ENCODE measurements at regions of chr11 and their contacts with region 1.

Region 1: GRCh38 chr11:304915-305843 is 2.4 kb upstream of the IFITM2 start:
- DNase-seq: peak; percentile 64 to 75 (median 67)
- H3K4me3 ChIP-seq: no peak overlapping the region
- H3K4me3 Mint-ChIP-seq: peak overlapping the region in 5 of 8 donors; percentile 36 to 76 (median 52)
- H3K27ac ChIP-seq: peak overlapping the region; percentile 6
- H3K27ac Mint-ChIP-seq: peak overlapping the region; percentile 1 to 89 (median 78)
- H3K4me1 ChIP-seq: peaks cover 42% of the 10 kb centered on the region
- H3K4me1 Mint-ChIP-seq: peaks cover 20 to 58% (median 34%) of the 10 kb centered on the region in 4 donors
- H3K27me3 ChIP-seq: no peaks in the 10 kb centered on the region
- H3K27me3 Mint-ChIP-seq: peaks cover 0 to 3% of the 10 kb centered on the region in 2 donors

Region 2: DNA sequence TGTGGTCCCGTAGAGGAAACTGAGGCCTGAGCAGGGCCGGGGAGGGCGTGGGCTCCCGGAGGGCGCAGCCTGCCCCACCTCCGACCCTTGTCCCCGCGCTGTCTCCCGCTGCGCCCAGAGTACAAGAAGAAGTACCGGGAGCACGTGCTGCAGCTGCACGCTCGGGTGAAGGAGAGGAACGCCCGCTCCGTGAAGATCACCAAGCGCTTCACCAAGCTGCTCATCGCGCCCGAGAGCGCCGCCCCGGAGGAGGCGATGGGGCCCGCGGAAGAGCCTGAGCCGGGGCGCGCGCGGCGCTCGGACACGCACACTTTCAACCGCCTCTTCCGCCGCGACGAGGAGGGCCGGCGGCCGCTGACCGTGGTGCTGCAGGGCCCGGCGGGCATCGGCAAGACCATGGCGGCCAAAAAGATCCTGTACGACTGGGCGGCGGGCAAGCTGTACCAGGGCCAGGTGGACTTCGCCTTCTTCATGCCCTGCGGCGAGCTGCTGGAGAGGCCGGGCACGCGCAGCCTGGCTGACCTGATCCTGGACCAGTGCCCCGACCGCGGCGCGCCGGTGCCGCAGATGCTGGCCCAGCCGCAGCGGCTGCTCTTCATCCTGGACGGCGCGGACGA is 25.1 kb before region 1 on chr11:
- CTCF ChIA-PET with region 1: interaction called, 6 read pairs
- POLR2A ChIA-PET with region 1: interaction called, 23 read pairs
- intact Hi-C with region 1: no loop called
- DNase-seq: peak in 4 of 5 donors; percentile 55 to 61 (median 57)
- H3K4me3 ChIP-seq: peak overlapping the region in 1 of 2 donors; percentile 59
- H3K4me3 Mint-ChIP-seq: peak overlapping the region; percentile 84 to 91 (median 88)
- H3K27ac ChIP-seq: no peak overlapping the region
- H3K27ac Mint-ChIP-seq: peak overlapping the region in 4 of 7 donors; percentile 70 to 92 (median 84)
- H3K4me1 ChIP-seq: peaks cover 60% of the 10 kb centered on the region
- H3K4me1 Mint-ChIP-seq: peaks cover 30 to 61% (median 46%) of the 10 kb centered on the region in 4 donors
- H3K27me3 ChIP-seq: no peaks in the 10 kb centered on the region
- H3K27me3 Mint-ChIP-seq: no peaks in the 10 kb centered on the region

Region 3: DNA sequence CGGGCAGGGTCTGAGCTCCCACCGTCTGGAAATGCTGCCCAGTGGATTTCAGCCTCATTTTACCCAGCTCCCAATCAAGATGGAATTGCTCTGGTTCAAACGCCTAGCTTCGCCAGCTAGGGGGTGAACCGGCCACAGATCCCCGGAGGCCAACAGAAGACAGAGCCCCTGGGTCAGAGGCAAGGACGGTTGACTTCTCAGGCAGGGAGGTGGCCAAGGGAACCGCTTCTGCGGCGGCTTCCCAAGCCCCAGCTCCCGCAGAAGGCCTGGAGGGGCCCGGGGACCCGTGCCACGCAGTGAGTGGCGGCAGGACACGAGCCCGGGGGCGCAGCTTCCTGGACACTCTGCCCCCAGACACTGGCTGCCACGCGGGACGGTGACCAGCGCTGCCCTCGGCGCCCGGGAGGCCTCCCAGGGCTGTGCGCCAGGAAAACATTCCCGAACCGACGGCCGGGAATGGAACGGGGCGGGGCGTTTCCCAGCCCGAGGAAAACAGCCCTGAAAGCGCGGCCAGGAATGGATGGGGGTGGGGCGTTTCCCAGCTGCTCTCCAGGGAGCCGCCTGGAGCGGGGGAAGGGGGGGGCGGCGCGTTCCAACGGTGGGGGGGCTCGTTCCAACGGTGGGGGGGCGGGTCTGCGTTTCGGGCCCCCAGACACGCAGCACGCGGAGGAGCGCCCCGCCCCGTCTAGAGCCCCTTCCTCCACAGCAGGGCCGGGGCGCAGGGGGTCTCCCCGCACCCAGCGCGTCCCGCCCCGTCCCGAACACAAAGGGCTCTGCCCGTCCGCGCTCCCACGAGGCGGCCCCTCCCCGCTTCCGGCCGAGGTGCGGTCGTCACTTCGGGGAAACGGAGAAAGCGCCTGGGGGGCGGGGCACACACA is 50.6 kb after region 1 on chr11:
- CTCF ChIA-PET with region 1: interaction called, 33 read pairs
- POLR2A ChIA-PET with region 1: interaction called, 25 read pairs
- intact Hi-C with region 1: loop called (anchors 1 kb)
- DNase-seq: peak; percentile 85 to 90 (median 86)
- H3K4me3 ChIP-seq: peak overlapping the region in 1 of 2 donors; percentile 59
- H3K4me3 Mint-ChIP-seq: peak overlapping the region; percentile 77 to 91 (median 84)
- H3K27ac ChIP-seq: peak overlapping the region; percentile 89
- H3K27ac Mint-ChIP-seq: peak overlapping the region in 6 of 7 donors; percentile 96 to 99 (median 97)
- H3K4me1 ChIP-seq: peaks cover 20% of the 10 kb centered on the region
- H3K4me1 Mint-ChIP-seq: peaks cover 7 to 50% (median 29%) of the 10 kb centered on the region in 4 donors
- H3K27me3 ChIP-seq: no peaks in the 10 kb centered on the region
- H3K27me3 Mint-ChIP-seq: no peaks in the 10 kb centered on the region

Region 4: DNA sequence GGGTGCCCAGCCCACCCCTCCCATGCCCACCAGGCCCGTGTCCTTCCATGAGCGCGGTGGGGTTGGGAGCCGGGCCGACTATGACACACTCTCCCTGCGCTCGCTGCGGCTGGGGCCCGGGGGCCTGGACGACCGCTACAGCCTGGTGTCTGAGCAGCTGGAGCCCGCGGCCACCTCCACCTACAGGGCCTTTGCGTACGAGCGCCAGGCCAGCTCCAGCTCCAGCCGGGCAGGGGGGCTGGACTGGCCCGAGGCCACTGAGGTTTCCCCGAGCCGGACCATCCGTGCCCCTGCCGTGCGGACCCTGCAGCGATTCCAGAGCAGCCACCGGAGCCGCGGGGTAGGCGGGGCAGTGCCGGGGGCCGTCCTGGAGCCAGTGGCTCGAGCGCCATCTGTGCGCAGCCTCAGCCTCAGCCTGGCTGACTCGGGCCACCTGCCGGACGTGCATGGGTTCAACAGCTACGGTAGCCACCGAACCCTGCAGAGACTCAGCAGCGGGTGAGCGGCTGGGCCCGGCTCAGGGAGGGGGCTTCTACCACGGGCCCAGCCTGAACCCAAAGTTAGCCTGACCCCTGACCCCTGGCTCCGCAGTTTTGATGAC is 91.9 kb after region 1 on chr11:
- CTCF ChIA-PET with region 1: interaction called, 3 read pairs
- POLR2A ChIA-PET with region 1: no interaction called
- intact Hi-C with region 1: loop called (anchors 2 kb)
- DNase-seq: peak; percentile 41 to 57 (median 46)
- H3K4me3 ChIP-seq: peak overlapping the region in 1 of 2 donors; percentile 35
- H3K4me3 Mint-ChIP-seq: peak overlapping the region in 5 of 8 donors; percentile 13 to 54 (median 21)
- H3K27ac ChIP-seq: no peak overlapping the region
- H3K27ac Mint-ChIP-seq: no peak overlapping the region
- H3K4me1 ChIP-seq: peaks cover 4% of the 10 kb centered on the region
- H3K4me1 Mint-ChIP-seq: peaks cover 0 to 10% (median 0%) of the 10 kb centered on the region in 4 donors
- H3K27me3 ChIP-seq: no peaks in the 10 kb centered on the region
- H3K27me3 Mint-ChIP-seq: no peaks in the 10 kb centered on the region

Region 5: GRCh38 chr11:518463-519250 is 213.5 kb after region 1 on chr11:
- CTCF ChIA-PET with region 1: no interaction called
- POLR2A ChIA-PET with region 1: no interaction called
- intact Hi-C with region 1: loop called (anchors 5 kb)
- DNase-seq: peak; percentile 82 to 91 (median 84)
- H3K4me3 ChIP-seq: peak overlapping the region in 1 of 2 donors; percentile 30
- H3K4me3 Mint-ChIP-seq: peak overlapping the region; percentile 20 to 91 (median 84)
- H3K27ac ChIP-seq: no peak overlapping the region
- H3K27ac Mint-ChIP-seq: peak overlapping the region; percentile 80 to 92 (median 88)
- H3K4me1 ChIP-seq: peaks cover 4% of the 10 kb centered on the region
- H3K4me1 Mint-ChIP-seq: peaks cover 2 to 12% (median 3%) of the 10 kb centered on the region in 4 donors
- H3K27me3 ChIP-seq: no peaks in the 10 kb centered on the region
- H3K27me3 Mint-ChIP-seq: no peaks in the 10 kb centered on the region

Region 6: GRCh38 chr11:1744137-1744886 is 1439.1 kb after region 1 on chr11:
- CTCF ChIA-PET with region 1: no interaction called
- POLR2A ChIA-PET with region 1: no interaction called
- intact Hi-C with region 1: no loop called
- DNase-seq: no peak
- H3K4me3 ChIP-seq: no peak overlapping the region
- H3K4me3 Mint-ChIP-seq: no peak overlapping the region
- H3K27ac ChIP-seq: no peak overlapping the region
- H3K27ac Mint-ChIP-seq: no peak overlapping the region
- H3K4me1 ChIP-seq: peaks cover 3% of the 10 kb centered on the region
- H3K4me1 Mint-ChIP-seq: peaks cover 0 to 11% (median 6%) of the 10 kb centered on the region in 4 donors
- H3K27me3 ChIP-seq: no peaks in the 10 kb centered on the region
- H3K27me3 Mint-ChIP-seq: peaks cover 0 to 4% of the 10 kb centered on the region in 2 donors

Measured in CD4-positive, alpha-beta memory T cell (primary cell).